ENCODE measurements at regions of chr20 and their contacts with region 1.

Region 1: GRCh38 chr20:50070991-50071888 is 41.7 kb downstream of the UBE2V1 start:
- DNase-seq: peak; percentile 79 to 88 (median 84)
- H3K4me3 ChIP-seq: peak overlapping the region in 5 of 7 experiments; percentile 47 to 77 (median 63)
- H3K27ac ChIP-seq: no peak overlapping the region
- H3K4me1 ChIP-seq: peaks cover 0 to 8% (median 3%) of the 10 kb centered on the region in 4 experiments
- H3K27me3 ChIP-seq: no peaks in the 10 kb centered on the region

Region 2: DNA sequence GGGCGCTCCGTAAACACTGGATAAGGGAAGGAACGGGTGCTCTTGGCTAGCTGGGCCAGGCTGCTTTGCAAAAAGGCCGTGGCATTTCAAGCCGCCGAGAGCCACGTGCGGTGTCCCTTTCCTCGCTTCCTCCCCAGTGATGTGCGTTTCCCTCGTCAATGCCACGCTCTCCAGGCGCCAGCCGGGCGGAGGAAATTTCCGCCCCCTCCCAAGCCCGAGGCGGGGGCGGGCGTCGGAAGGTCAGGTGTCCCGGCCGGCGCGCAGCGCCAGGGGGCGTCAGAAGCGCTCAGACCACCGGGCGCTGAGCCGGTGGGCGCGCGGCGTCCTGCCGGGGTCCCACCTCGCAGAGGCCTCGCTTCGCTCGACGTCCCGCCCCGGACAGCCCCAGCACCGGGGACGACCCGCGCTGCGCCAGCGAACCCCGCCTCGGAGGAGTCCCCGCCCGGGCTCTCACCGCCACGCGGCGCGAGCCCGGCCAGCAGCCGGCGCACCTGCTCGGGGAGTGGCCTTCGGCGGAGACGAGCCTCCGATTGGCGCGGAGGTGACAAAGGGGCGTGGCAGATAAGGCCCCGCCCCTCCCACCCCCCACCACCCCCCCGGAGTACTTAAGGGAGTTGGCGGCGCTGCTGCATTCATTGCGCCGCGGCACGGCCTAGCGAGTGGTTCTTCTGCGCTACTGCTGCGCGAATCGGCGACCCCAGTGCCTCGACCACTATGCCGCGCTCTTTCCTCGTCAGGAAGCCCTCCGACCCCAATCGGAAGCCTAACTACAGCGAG is 88.7 kb before region 1 on chr20 and contains the start of gene SNAI1:
- CTCF ChIA-PET with region 1: interaction called, 314 read pairs
- POLR2A ChIA-PET with region 1: interaction called, 11 read pairs
- DNase-seq: peak; percentile 83 to 93 (median 92)
- H3K4me3 ChIP-seq: peak within 1 kb of the TSS in 6 of 7 experiments; percentile 42 to 73 (median 61)
- H3K27ac ChIP-seq: peak within 1 kb of the TSS in 1 of 2 experiments; percentile 78
- H3K4me1 ChIP-seq: peaks cover 0 to 70% (median 35%) of the 10 kb centered on the region in 4 experiments
- H3K27me3 ChIP-seq: no peaks in the 10 kb centered on the region

Region 3: GRCh38 chr20:49989234-49990065 is 81.8 kb before region 1 on chr20:
- CTCF ChIA-PET with region 1: interaction called, 314 read pairs
- POLR2A ChIA-PET with region 1: interaction called, 3 read pairs
- DNase-seq: peak; percentile 33 to 44 (median 40)
- H3K4me3 ChIP-seq: peak overlapping the region in 2 of 7 experiments; percentile 25 to 39
- H3K27ac ChIP-seq: peak overlapping the region in 1 of 2 experiments; percentile 14
- H3K4me1 ChIP-seq: peaks cover 0 to 67% (median 24%) of the 10 kb centered on the region in 4 experiments
- H3K27me3 ChIP-seq: no peaks in the 10 kb centered on the region

Region 4: DNA sequence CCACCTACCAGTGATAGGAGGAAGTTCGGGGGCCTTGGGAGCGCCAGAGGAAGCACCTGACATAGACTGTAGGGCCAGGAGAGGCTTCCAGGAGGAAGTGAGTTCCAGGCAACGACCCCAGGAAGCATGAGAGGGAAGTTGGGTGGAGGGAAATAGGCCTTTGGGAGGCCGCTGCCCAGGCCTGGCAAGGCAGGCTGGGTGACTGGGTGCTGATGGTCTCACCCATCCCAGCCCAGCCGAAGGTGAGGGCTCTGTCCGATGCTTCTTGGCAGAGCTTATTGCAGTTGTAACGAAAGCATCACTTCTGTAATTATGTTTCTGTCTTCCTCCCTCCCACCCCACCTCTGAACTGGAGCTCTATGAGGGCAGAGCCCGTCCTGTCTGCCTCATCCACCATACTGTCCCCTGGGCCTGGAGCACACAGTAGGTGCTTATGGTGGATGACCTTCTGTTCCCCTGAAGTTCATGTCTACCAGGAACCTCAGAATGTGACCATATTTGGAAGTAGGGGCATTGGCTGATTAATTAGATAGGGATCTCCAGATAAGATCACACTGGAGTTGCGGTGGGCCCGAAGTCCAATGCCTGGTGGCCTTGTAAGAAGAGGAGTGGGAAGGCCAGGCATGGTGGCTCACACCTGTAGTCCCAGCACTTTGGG is 12.4 kb before region 1 on chr20:
- CTCF ChIA-PET with region 1: interaction called, 45 read pairs
- POLR2A ChIA-PET with region 1: no interaction called
- DNase-seq: peak in 1 of 3 donors; percentile 30
- H3K4me3 ChIP-seq: no peak overlapping the region
- H3K27ac ChIP-seq: no peak overlapping the region
- H3K4me1 ChIP-seq: peaks cover 0 to 16% (median 4%) of the 10 kb centered on the region in 4 experiments
- H3K27me3 ChIP-seq: no peaks in the 10 kb centered on the region

Region 5: DNA sequence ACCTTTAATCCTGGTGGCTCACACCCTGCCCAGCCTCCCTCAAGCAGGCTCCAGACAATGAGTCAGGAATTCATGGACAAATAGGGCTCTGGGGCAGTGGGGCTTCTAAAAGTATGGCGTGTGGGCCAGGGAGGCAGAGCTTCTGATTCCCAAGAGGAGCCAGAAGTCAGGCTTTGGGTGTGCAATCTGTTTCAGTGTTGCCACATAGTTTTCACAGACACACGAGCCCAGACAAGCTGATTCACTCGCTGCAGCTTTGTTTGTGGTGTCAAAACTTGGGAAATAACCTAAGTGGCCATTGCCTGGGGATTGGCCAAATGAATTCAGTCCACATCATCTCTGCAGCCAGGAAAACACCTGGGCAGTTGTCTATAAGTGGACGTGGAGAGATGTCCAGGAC is 73.1 kb after region 1 on chr20:
- CTCF ChIA-PET with region 1: no interaction called
- POLR2A ChIA-PET with region 1: no interaction called
- DNase-seq: peak in 1 of 3 donors; percentile 31
- H3K4me3 ChIP-seq: no peak overlapping the region
- H3K27ac ChIP-seq: no peak overlapping the region
- H3K4me1 ChIP-seq: peaks cover 3 to 25% (median 22%) of the 10 kb centered on the region in 4 experiments
- H3K27me3 ChIP-seq: no peaks in the 10 kb centered on the region